ENCODE measurements at regions of chr10 and their contacts with region 1.

Region 1: DNA sequence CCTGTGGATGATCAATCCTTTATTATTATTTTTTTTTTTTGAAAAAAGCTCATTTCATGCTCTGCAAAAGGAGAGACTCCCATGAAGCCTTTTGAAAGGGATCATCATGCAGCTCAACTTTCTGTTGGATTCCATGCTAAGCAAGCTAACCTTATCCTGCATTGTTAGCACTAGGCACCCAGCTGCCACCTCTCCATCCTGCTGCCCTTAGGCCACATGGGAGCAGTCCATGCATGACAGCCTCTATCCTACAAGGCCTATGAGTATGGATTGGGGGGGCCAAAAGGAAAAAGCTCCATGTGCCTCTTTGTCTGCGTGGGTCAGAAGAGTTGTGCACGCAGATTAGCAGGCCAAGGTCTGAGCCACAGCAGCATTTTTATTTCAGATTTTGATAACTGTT is 19.2 kb downstream of the SMNDC1 start:
- DNase-seq: no peak
- ATAC-seq: no peak; the same call in 2 of the 3 replicates
- H3K4me3 ChIP-seq: no peak overlapping the region
- H3K27ac ChIP-seq: no peak overlapping the region
- H3K4me1 ChIP-seq: no peaks in the 10 kb centered on the region
- H3K27me3 ChIP-seq: no peaks in the 10 kb centered on the region
- CTCF ChIP-seq: no peak
- EP300 ChIP-seq: no peak
- POLR2A ChIP-seq: no peak
- RAD21 ChIP-seq: no peak

Region 2: GRCh38 chr10:110252151-110252550 is 33.4 kb before region 1 on chr10:
- CTCF ChIA-PET with region 1: no interaction called
- POLR2A ChIA-PET with region 1: no interaction called
- RAD21 ChIA-PET with region 1: no interaction called
- SMC1A ChIA-PET with region 1: no interaction called
- in situ Hi-C with region 1: no loop called
- intact Hi-C with region 1: no loop called
- DNase-seq: no peak
- ATAC-seq: no peak
- H3K4me3 ChIP-seq: no peak overlapping the region
- H3K27ac ChIP-seq: no peak overlapping the region
- H3K4me1 ChIP-seq: peaks cover 19% of the 10 kb centered on the region
- H3K27me3 ChIP-seq: peaks cover 0 to 2% of the 10 kb centered on the region in 2 experiments; a peak in 1 of 4 replicates
- CTCF ChIP-seq: no peak
- EP300 ChIP-seq: no peak
- POLR2A ChIP-seq: no peak
- RAD21 ChIP-seq: no peak

Region 3: DNA sequence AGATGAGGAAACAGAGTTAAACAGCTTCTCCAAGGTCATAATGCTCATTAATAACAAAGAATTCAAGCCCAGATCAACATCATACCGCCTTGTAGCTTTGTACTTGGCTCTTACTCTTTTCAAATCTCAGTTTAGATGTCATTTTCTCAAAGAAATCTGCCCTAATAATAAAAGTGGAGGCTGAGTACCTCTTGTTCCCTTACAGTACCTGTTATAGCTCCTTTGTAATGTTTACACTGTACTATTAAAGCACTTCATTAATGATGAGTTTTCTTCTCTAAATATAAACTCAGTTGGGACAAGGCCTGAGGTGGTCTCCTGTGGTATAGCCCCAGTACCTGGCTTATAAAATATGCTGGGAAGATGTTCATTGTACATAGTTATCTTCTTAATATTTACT is 11.5 kb after region 1 on chr10:
- CTCF ChIA-PET with region 1: interaction called, 7 read pairs
- POLR2A ChIA-PET with region 1: interaction called, 3 read pairs
- RAD21 ChIA-PET with region 1: interaction called, 5 read pairs
- SMC1A ChIA-PET with region 1: interaction called, 12 read pairs
- in situ Hi-C with region 1: no loop called
- intact Hi-C with region 1: no loop called
- DNase-seq: no peak
- ATAC-seq: no peak
- H3K4me3 ChIP-seq: no peak overlapping the region
- H3K27ac ChIP-seq: no peak overlapping the region
- H3K4me1 ChIP-seq: no peaks in the 10 kb centered on the region
- H3K27me3 ChIP-seq: no peaks in the 10 kb centered on the region
- CTCF ChIP-seq: no peak
- EP300 ChIP-seq: no peak
- POLR2A ChIP-seq: no peak
- RAD21 ChIP-seq: no peak

Region 4: DNA sequence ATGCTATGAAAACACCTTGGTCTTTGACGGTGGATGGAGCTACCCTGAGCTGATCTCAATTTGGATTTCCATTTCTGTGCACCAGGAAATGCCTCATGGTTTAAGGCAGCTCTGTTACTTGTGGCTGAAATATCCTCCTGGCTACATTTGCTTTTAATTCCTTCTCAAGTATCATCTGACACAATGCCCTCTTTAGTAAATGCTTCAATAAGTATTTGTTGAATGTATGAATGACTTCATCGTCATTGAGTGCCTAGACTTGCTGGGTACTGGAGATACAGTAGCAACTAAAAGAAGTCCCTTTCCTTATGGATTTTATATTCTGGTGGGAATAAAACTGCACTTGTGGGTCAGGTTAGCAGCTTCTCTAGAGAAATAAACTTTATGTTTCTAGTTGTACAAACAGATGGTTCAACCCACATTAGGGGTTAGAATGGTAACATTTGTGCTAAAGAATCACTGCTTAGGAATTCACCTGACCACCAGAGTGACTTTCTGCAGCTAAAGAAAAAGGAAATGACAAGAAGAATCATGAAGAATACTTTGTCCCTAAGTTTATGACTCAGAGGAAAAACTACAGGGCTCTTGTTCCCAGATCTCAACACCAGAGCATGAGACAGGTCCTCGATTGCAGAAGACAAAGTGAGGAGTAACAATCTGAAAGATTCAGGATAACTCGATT is 41.0 kb after region 1 on chr10:
- CTCF ChIA-PET with region 1: no interaction called
- POLR2A ChIA-PET with region 1: no interaction called
- RAD21 ChIA-PET with region 1: no interaction called
- SMC1A ChIA-PET with region 1: no interaction called
- in situ Hi-C with region 1: no loop called
- intact Hi-C with region 1: no loop called
- DNase-seq: peak; percentile 51
- ATAC-seq: peak; percentile 49
- H3K4me3 ChIP-seq: no peak overlapping the region
- H3K27ac ChIP-seq: peak overlapping the region; percentile 79
- H3K4me1 ChIP-seq: peaks cover 39% of the 10 kb centered on the region
- H3K27me3 ChIP-seq: no peaks in the 10 kb centered on the region
- CTCF ChIP-seq: no peak
- EP300 ChIP-seq: peak in 1 of 2 experiments; percentile 60; a peak in 1 of 4 replicates
- POLR2A ChIP-seq: no peak
- RAD21 ChIP-seq: no peak

Measured in GM12878 (cell line).